ENCODE measurements at regions of chr19 and their contacts with region 1.

Region 1: GRCh38 chr19:46614114-46614722 is 10.7 kb downstream of the PTGIR start:
- DNase-seq: peak; percentile 89
- ATAC-seq: peak; percentile 93
- H3K4me3 ChIP-seq: no peak overlapping the region
- H3K27ac ChIP-seq: no peak overlapping the region
- H3K4me1 ChIP-seq: peaks cover 22% of the 10 kb centered on the region
- H3K27me3 ChIP-seq: no peaks in the 10 kb centered on the region
- CTCF ChIP-seq: peak; percentile 91

Region 2: GRCh38 chr19:46564701-46565100 is 49.5 kb before region 1 on chr19:
- intact Hi-C with region 1: no loop called
- DNase-seq: no peak
- ATAC-seq: no peak
- H3K4me3 ChIP-seq: no peak overlapping the region
- H3K27ac ChIP-seq: no peak overlapping the region
- H3K4me1 ChIP-seq: no peaks in the 10 kb centered on the region
- H3K27me3 ChIP-seq: no peaks in the 10 kb centered on the region
- CTCF ChIP-seq: no peak

Region 3: DNA sequence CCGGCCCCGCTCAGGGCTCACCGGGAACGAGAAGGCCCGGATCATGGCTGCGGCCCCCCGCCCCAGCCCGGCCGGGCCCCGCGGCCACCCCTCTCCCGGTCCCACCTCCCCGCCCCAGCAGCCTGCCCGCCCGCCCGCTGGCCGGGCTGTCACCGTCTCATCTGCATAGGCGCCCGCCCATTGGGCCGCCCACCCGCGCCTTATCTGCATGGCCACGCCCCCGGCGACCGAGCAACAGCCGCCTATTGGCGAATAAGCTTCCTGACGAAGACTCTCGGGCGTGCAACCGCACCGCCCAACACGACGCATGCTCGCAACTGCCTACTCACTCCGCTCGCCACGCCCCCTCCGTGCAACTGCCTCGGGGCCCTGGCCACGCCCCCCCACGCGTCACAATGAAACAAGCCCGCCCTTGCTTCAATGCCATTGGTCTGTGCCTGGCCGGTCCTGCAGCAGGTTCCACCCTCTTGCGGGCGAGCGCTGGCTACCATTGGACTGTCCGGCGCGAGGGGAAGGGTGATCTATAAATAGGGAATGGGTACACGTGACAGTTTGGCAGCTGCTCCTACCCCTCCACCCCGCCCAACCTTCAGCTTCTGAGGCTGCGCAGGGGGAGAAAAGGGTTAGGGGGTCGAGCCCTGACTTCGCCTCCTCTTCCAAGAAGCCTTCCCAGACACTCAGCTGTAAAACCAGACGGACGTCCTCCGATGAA is 47.0 kb after region 1 on chr19 and contains the start of gene DACT3:
- intact Hi-C with region 1: loop called (anchors 5 kb)
- DNase-seq: peak; percentile 100
- ATAC-seq: peak; percentile 97
- H3K4me3 ChIP-seq: peak within 1 kb of the TSS; percentile 57
- H3K27ac ChIP-seq: peak within 1 kb of the TSS; percentile 56
- H3K4me1 ChIP-seq: peaks cover 21% of the 10 kb centered on the region
- H3K27me3 ChIP-seq: peaks cover 30% of the 10 kb centered on the region
- CTCF ChIP-seq: no peak
- total RNA-seq, gene DACT3: 10.0 TPM

Region 4: GRCh38 chr19:46732936-46733692 is 118.9 kb after region 1 on chr19:
- intact Hi-C with region 1: no loop called
- DNase-seq: peak; percentile 73
- ATAC-seq: peak; percentile 74
- H3K4me3 ChIP-seq: no peak overlapping the region
- H3K27ac ChIP-seq: peak overlapping the region; percentile 11
- H3K4me1 ChIP-seq: peaks cover 36% of the 10 kb centered on the region
- H3K27me3 ChIP-seq: no peaks in the 10 kb centered on the region
- CTCF ChIP-seq: no peak

Measured in upper lobe of right lung (tissue), 1 donor.